Activated naive CD4-positive, alpha-beta T cell treated with anti-CD3 and anti-CD28 coated beads for 36 hours (primary cell): ENCODE measurements at regions of chr10 and their contacts with region 1.

Region 1: GRCh38 chr10:3935141-3935540 is 150.1 kb upstream of the KLF6 start:
- DNase-seq: peak; percentile 92
- H3K4me3 Mint-ChIP-seq: peak overlapping the region; percentile 10
- H3K27ac Mint-ChIP-seq: peak overlapping the region; percentile 88
- H3K4me1 Mint-ChIP-seq: peaks cover 40% of the 10 kb centered on the region
- H3K27me3 Mint-ChIP-seq: no peaks in the 10 kb centered on the region

Region 2: DNA sequence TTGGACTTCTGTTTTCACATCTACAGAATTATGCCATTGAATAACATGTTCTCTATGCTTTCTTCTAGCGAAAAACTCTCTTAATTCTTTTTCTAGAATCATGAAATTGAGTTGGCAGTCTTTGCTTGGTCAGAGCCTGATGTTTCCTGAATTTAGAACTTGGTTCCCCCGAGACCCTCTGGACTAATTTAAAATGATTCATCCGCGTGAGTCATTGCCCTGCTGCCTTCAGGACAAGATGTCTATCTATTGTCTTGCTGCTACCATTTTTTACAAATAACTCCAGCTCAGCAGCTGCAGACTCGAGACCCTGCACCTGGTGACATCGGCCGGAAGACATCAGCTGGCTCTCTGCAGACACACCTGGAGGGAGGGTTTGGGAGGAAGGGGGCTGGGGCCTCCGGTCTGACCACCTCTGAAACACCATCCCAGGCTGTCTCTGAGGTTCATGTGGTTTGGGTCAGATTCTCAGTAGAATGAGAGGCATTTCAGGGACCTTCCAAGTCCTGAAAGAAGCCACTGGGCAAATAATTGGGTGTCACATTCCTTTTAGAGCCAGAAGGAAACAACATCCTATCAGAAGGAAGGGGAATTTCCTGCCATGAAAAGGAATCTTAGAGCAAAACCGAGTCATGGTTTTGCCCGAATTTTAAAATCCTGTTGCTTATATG is 129.2 kb before region 1 on chr10:
- CTCF ChIA-PET with region 1: no interaction called
- intact Hi-C with region 1: loop called (anchors 1 kb)
- DNase-seq: peak; percentile 45
- H3K4me3 Mint-ChIP-seq: peak overlapping the region; percentile 10
- H3K27ac Mint-ChIP-seq: no peak overlapping the region
- H3K4me1 Mint-ChIP-seq: peaks cover 73% of the 10 kb centered on the region
- H3K27me3 Mint-ChIP-seq: no peaks in the 10 kb centered on the region

Region 3: GRCh38 chr10:3828404-3829155 is 106.6 kb before region 1 on chr10:
- CTCF ChIA-PET with region 1: no interaction called
- intact Hi-C with region 1: loop called (anchors 1 kb)
- DNase-seq: peak; percentile 82
- H3K4me3 Mint-ChIP-seq: peak overlapping the region; percentile 52
- H3K27ac Mint-ChIP-seq: peak overlapping the region; percentile 87
- H3K4me1 Mint-ChIP-seq: peaks cover 43% of the 10 kb centered on the region
- H3K27me3 Mint-ChIP-seq: no peaks in the 10 kb centered on the region

Region 4: GRCh38 chr10:3867454-3868270 is 67.5 kb before region 1 on chr10:
- CTCF ChIA-PET with region 1: no interaction called
- intact Hi-C with region 1: loop called (anchors 1 kb)
- DNase-seq: peak; percentile 46
- H3K4me3 Mint-ChIP-seq: no peak overlapping the region
- H3K27ac Mint-ChIP-seq: peak overlapping the region; percentile 70
- H3K4me1 Mint-ChIP-seq: peaks cover 53% of the 10 kb centered on the region
- H3K27me3 Mint-ChIP-seq: no peaks in the 10 kb centered on the region

Region 5: GRCh38 chr10:3946234-3947229 is 11.4 kb after region 1 on chr10:
- CTCF ChIA-PET with region 1: no interaction called
- intact Hi-C with region 1: loop called (anchors 1 kb)
- DNase-seq: no peak
- H3K4me3 Mint-ChIP-seq: no peak overlapping the region
- H3K27ac Mint-ChIP-seq: no peak overlapping the region
- H3K4me1 Mint-ChIP-seq: peaks cover 41% of the 10 kb centered on the region
- H3K27me3 Mint-ChIP-seq: no peaks in the 10 kb centered on the region

Region 6: DNA sequence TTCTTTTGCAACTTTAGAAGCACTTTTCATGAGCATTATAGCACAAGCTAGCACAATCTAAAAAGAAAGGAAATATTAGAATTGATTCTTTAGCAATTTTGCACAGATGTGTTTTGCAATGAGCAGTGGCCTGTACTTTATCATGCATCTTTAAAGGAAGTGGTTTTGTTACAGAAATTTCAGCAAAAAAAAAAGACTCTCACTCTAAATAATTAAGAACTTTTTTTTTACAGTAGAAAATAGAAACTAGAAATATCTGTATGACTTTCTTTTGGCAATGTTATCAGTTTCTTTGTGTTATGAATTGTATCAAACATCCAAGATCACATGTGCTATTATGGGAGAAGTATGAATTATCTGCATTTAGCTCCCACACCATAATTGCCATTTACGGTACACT is 45.5 kb after region 1 on chr10:
- CTCF ChIA-PET with region 1: no interaction called
- intact Hi-C with region 1: loop called (anchors 1 kb)
- DNase-seq: no peak
- H3K4me3 Mint-ChIP-seq: no peak overlapping the region
- H3K27ac Mint-ChIP-seq: no peak overlapping the region
- H3K4me1 Mint-ChIP-seq: peaks cover 31% of the 10 kb centered on the region
- H3K27me3 Mint-ChIP-seq: no peaks in the 10 kb centered on the region